CD8-positive, alpha-beta T cell (primary cell): ENCODE measurements at regions of chr7 and their contacts with region 1.

Region 1: DNA sequence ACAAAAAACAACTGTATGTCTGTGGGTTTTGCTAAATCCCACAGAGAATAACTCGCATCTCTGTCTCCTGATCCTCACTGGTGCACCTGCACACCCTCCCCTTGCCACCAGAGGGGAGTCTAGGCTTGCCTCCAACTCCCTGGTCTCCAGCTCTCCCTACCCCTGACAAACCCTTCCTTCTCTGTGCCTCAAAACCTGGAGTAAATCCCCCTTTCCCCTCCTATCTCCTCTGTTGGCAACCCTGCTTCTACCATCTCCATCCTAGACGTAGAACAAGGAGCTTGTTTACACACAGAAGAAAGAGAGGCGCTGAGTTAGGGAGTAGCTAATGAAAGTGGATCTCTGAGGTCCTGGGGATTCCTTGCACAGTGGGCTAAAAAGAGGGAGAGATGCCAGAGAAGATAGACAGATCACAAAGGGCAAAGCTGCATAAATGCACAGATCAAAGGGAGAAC is 6.0 kb downstream of the MBLAC1 start:
- DNase-seq: peak; percentile 28 to 81 (median 71)
- ATAC-seq: peak; percentile 77
- H3K4me3 ChIP-seq: no peak overlapping the region
- H3K4me3 Mint-ChIP-seq: no peak overlapping the region
- H3K27ac ChIP-seq: no peak overlapping the region
- H3K27ac Mint-ChIP-seq: no peak overlapping the region
- H3K4me1 ChIP-seq: peaks cover 14% of the 10 kb centered on the region
- H3K4me1 Mint-ChIP-seq: peaks cover 16% of the 10 kb centered on the region
- H3K27me3 ChIP-seq: no peaks in the 10 kb centered on the region
- H3K27me3 Mint-ChIP-seq: no peaks in the 10 kb centered on the region
- CTCF ChIP-seq: peak; percentile 87

Region 2: DNA sequence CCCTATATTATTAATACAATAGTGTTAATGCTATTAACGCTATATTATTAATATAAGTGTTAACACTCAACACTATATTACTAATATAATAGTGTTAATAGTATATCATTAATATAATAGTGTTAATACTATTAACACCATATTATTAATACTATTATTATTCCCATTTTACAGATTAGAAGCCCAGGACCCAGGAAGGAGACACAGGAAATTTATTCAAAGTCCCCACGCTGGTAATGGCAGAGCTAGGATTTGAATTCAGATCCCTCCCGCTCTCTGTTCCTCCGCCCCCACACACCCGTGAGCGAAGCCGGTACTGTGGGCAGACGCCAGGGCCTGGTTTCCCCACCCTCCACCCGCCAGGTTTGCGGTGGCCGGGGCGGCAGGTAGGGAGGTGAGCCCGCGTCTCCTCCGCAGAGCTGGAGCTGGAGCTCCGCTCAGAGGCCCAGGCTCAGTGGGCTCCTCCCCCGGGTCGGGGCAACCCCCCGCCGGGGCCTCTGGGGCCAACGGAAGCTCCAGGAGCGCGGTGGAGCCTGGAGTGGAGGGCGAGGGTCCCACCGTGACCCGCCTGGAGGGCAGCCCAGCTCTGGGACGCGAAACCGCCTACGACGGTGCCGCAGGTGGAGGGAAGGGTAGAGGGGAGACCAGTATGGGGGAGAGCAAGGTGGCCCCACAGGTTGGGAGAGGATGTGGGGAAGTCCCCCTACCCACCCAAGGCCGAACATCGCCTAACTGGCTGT is 534.8 kb before region 1 on chr7 and contains the start of gene TMEM225B:
- CTCF ChIA-PET with region 1: no interaction called
- POLR2A ChIA-PET with region 1: no interaction called
- intact Hi-C with region 1: no loop called
- DNase-seq: peak in 3 of 9 experiments; percentile 10 to 33 (median 23)
- ATAC-seq: peak; percentile 29
- H3K4me3 ChIP-seq: no peak within 1 kb of the TSS
- H3K4me3 Mint-ChIP-seq: no peak within 1 kb of the TSS
- H3K27ac ChIP-seq: no peak within 1 kb of the TSS
- H3K27ac Mint-ChIP-seq: no peak within 1 kb of the TSS
- H3K4me1 ChIP-seq: no peaks in the 10 kb centered on the region
- H3K4me1 Mint-ChIP-seq: peaks cover 4% of the 10 kb centered on the region
- H3K27me3 ChIP-seq: no peaks in the 10 kb centered on the region
- H3K27me3 Mint-ChIP-seq: no peaks in the 10 kb centered on the region
- CTCF ChIP-seq: no peak
- total RNA-seq, gene TMEM225B: 0.94 to 2.1 TPM

Region 3: GRCh38 chr7:99975782-99976521 is 156.8 kb before region 1 on chr7 and contains the start of gene AZGP1:
- CTCF ChIA-PET with region 1: interaction called, 36 read pairs
- POLR2A ChIA-PET with region 1: no interaction called
- intact Hi-C with region 1: loop called (anchors 1 kb)
- DNase-seq: no peak
- ATAC-seq: no peak
- H3K4me3 ChIP-seq: no peak within 1 kb of the TSS
- H3K4me3 Mint-ChIP-seq: no peak within 1 kb of the TSS
- H3K27ac ChIP-seq: no peak within 1 kb of the TSS
- H3K27ac Mint-ChIP-seq: no peak within 1 kb of the TSS
- H3K4me1 ChIP-seq: no peaks in the 10 kb centered on the region
- H3K4me1 Mint-ChIP-seq: peaks cover 6% of the 10 kb centered on the region
- H3K27me3 ChIP-seq: no peaks in the 10 kb centered on the region
- H3K27me3 Mint-ChIP-seq: peaks cover 4% of the 10 kb centered on the region
- CTCF ChIP-seq: no peak
- total RNA-seq, gene AZGP1: not detected

Region 4: DNA sequence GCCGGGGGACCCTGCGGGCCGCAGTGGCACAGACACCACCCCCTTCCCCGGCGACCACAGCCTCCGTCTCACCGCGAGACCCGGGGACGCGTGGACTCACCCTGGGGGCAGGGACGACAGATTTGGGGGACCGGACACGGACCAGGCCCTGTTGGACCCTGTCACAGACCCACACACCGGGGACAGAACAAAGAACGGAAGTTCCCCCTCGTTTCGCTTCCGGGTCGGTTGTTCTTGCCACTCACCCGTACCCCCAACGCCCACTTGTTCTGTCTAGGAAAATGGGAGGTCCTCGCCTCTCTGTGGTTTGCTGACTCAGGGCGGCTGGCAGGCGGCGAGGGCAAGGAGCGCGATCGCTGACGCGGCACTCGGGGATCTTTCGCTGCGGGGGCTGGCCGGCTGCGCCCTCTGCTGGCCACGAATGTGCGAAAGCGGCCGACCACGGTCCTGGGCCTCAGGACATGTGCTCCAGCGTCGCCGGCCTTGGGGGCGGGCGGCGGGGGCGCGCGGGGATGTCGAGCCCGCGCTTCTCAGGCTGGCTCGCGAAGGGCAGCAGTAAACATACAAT is 51.1 kb before region 1 on chr7 and contains the start of gene ZNF3:
- CTCF ChIA-PET with region 1: interaction called, 7 read pairs
- POLR2A ChIA-PET with region 1: interaction called, 3 read pairs
- intact Hi-C with region 1: loop called (anchors 1 kb)
- DNase-seq: peak; percentile 94 to 99 (median 97)
- ATAC-seq: peak; percentile 88
- H3K4me3 ChIP-seq: peak within 1 kb of the TSS; percentile 64 to 65
- H3K4me3 Mint-ChIP-seq: peak within 1 kb of the TSS; percentile 94
- H3K27ac ChIP-seq: peak within 1 kb of the TSS; percentile 58 to 78
- H3K27ac Mint-ChIP-seq: peak within 1 kb of the TSS; percentile 96
- H3K4me1 ChIP-seq: peaks cover 17% of the 10 kb centered on the region
- H3K4me1 Mint-ChIP-seq: peaks cover 38% of the 10 kb centered on the region
- H3K27me3 ChIP-seq: no peaks in the 10 kb centered on the region
- H3K27me3 Mint-ChIP-seq: no peaks in the 10 kb centered on the region
- CTCF ChIP-seq: peak; percentile 98
- total RNA-seq, gene ZNF3: 34.9 to 35.6 TPM

Region 5: GRCh38 chr7:100119062-100119700 is 13.5 kb before region 1 on chr7 and contains the starts of genes CNPY4 and TAF6:
- CTCF ChIA-PET with region 1: interaction called, 29 read pairs
- POLR2A ChIA-PET with region 1: interaction called, 15 read pairs
- intact Hi-C with region 1: loop called (anchors 1 kb)
- DNase-seq: peak; percentile 86 to 97 (median 96)
- ATAC-seq: peak; percentile 69
- H3K4me3 ChIP-seq: peak within 1 kb of the TSS; percentile 80 to 93
- H3K4me3 Mint-ChIP-seq: peak within 1 kb of the TSS; percentile 99
- H3K27ac ChIP-seq: peak within 1 kb of the TSS; percentile 88 to 93
- H3K27ac Mint-ChIP-seq: peak within 1 kb of the TSS; percentile 93
- H3K4me1 ChIP-seq: peaks cover 17% of the 10 kb centered on the region
- H3K4me1 Mint-ChIP-seq: peaks cover 28% of the 10 kb centered on the region
- H3K27me3 ChIP-seq: no peaks in the 10 kb centered on the region
- H3K27me3 Mint-ChIP-seq: no peaks in the 10 kb centered on the region
- CTCF ChIP-seq: no peak
- total RNA-seq, gene CNPY4: 21.4 to 24.4 TPM
- total RNA-seq, gene TAF6: 24.9 to 31.6 TPM

Region 6: GRCh38 chr7:100171087-100171681 is 38.5 kb after region 1 on chr7:
- CTCF ChIA-PET with region 1: interaction called, 53 read pairs
- POLR2A ChIA-PET with region 1: no interaction called
- intact Hi-C with region 1: loop called in 1 of 2 experiments (anchors 5 kb)
- DNase-seq: peak in 6 of 9 experiments; percentile 38 to 69 (median 59)
- ATAC-seq: peak; percentile 44
- H3K4me3 ChIP-seq: peak overlapping the region; percentile 42 to 54
- H3K4me3 Mint-ChIP-seq: peak overlapping the region; percentile 82
- H3K27ac ChIP-seq: no peak overlapping the region
- H3K27ac Mint-ChIP-seq: peak overlapping the region; percentile 88
- H3K4me1 ChIP-seq: peaks cover 56% of the 10 kb centered on the region
- H3K4me1 Mint-ChIP-seq: peaks cover 67% of the 10 kb centered on the region
- H3K27me3 ChIP-seq: peaks cover 0 to 23% of the 10 kb centered on the region in 2 experiments
- H3K27me3 Mint-ChIP-seq: peaks cover 3% of the 10 kb centered on the region
- CTCF ChIP-seq: no peak

Region 7: GRCh38 chr7:100200693-100201092 is 68.0 kb after region 1 on chr7:
- CTCF ChIA-PET with region 1: interaction called, 12 read pairs
- POLR2A ChIA-PET with region 1: no interaction called
- intact Hi-C with region 1: no loop called
- DNase-seq: no peak
- ATAC-seq: no peak
- H3K4me3 ChIP-seq: no peak overlapping the region
- H3K4me3 Mint-ChIP-seq: no peak overlapping the region
- H3K27ac ChIP-seq: no peak overlapping the region
- H3K27ac Mint-ChIP-seq: no peak overlapping the region
- H3K4me1 ChIP-seq: no peaks in the 10 kb centered on the region
- H3K4me1 Mint-ChIP-seq: no peaks in the 10 kb centered on the region
- H3K27me3 ChIP-seq: no peaks in the 10 kb centered on the region
- H3K27me3 Mint-ChIP-seq: no peaks in the 10 kb centered on the region
- CTCF ChIP-seq: no peak

Region 8: GRCh38 chr7:100342765-100343164 is 210.0 kb after region 1 on chr7:
- CTCF ChIA-PET with region 1: interaction called, 11 read pairs
- POLR2A ChIA-PET with region 1: no interaction called
- intact Hi-C with region 1: loop called (anchors 5 kb)
- DNase-seq: no peak
- ATAC-seq: no peak
- H3K4me3 ChIP-seq: no peak overlapping the region
- H3K4me3 Mint-ChIP-seq: no peak overlapping the region
- H3K27ac ChIP-seq: peak overlapping the region in 1 of 2 experiments; percentile 28
- H3K27ac Mint-ChIP-seq: peak overlapping the region; percentile 77
- H3K4me1 ChIP-seq: peaks cover 9% of the 10 kb centered on the region
- H3K4me1 Mint-ChIP-seq: peaks cover 23% of the 10 kb centered on the region
- H3K27me3 ChIP-seq: no peaks in the 10 kb centered on the region
- H3K27me3 Mint-ChIP-seq: no peaks in the 10 kb centered on the region
- CTCF ChIP-seq: no peak